ENCODE measurements at regions of chr19 and their contacts with region 1.

Region 1: GRCh38 chr19:11482384-11483050 is 1.7 kb upstream of the ELAVL3 start:
- H3K4me3 ChIP-seq: peak overlapping the region; percentile 28
- H3K27ac ChIP-seq: peak overlapping the region; percentile 33; the same call in 1 of the 2 replicates
- H3K4me1 ChIP-seq: no peaks in the 10 kb centered on the region
- CTCF ChIP-seq: peak; percentile 97

Region 2: GRCh38 chr19:11463391-11463790 is 19.1 kb before region 1 on chr19:
- CTCF ChIA-PET with region 1: interaction called, 12 read pairs
- POLR2A ChIA-PET with region 1: no interaction called
- H3K4me3 ChIP-seq: no peak overlapping the region
- H3K27ac ChIP-seq: no peak overlapping the region
- H3K4me1 ChIP-seq: no peaks in the 10 kb centered on the region
- CTCF ChIP-seq: no peak

Region 3: DNA sequence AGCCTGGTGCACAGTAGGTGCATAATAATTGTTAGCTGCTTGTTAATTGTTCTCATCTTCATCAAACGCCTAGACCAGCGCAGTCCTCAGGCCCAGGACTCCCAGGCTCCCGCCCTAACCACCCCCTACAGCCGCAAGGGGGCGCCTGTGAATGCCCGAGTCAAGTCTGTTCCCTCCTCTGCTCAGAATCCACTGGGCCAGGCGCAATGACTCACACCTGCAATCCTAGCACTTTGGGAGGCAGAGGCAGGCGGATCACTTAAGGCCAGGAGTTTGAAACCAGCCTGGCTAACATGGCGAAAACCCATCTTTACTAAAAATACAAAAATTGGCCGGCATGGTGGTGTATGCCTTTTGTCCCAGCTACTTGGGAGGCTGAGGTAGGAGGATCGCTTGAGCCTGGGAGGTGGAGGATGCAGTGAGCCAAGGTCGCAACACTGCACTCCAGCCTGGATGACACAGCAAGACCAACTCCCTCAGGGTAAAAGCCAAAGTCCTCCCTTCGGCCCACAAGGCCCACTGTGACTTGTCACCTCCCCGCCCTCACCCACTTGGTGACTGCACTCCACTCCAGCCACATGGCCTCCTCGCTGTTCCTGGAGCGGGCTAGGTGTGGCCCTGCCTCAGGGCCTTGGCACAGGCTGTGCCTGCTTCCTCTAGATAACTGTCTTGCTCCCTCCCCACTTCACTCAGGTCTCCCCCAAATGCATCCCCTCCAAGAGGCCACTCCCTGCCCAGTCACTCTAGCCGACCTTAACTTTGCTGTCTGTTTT is 14.1 kb after region 1 on chr19:
- CTCF ChIA-PET with region 1: interaction called, 12 read pairs
- POLR2A ChIA-PET with region 1: interaction called, 4 read pairs
- H3K4me3 ChIP-seq: no peak overlapping the region
- H3K27ac ChIP-seq: no peak overlapping the region
- H3K4me1 ChIP-seq: no peaks in the 10 kb centered on the region
- CTCF ChIP-seq: peak; percentile 38; the same call in 1 of the 2 replicates